Left ventricle myocardium inferior (tissue), 1 donor: ENCODE measurements at regions of chr2 and their contacts with region 1.

Region 1: DNA sequence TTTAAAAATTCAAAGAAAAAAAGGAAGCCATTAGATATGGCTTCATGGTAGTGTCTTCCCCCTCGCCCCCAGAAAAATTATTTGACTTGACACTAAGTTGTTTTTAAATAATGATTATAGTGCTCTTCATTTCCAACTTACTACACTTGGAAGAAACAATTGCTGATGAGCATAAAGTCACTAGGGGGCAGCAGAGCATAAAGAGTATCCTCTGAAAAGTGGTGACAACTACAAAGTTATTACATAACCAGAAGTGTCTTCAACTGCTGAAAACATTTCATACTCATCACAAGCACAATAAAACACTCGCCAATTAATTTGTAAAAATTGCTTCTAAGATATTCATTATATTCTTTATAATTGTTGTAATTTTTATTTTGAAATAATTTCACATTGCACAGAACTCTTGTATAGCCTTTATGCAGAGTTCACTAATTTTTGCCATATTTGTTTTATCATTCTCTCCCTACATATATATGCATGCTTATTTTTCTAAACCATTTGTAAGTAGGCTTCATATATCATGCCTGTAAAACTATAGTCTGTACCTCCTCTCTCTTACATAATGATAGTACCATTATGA is 54.9 kb downstream of the EXOC6B start:
- DNase-seq: no peak
- H3K4me3 ChIP-seq: no peak overlapping the region
- H3K27ac ChIP-seq: no peak overlapping the region
- H3K4me1 ChIP-seq: peaks cover 10% of the 10 kb centered on the region
- H3K27me3 ChIP-seq: no peaks in the 10 kb centered on the region
- CTCF ChIP-seq: peak; percentile 93

Region 2: DNA sequence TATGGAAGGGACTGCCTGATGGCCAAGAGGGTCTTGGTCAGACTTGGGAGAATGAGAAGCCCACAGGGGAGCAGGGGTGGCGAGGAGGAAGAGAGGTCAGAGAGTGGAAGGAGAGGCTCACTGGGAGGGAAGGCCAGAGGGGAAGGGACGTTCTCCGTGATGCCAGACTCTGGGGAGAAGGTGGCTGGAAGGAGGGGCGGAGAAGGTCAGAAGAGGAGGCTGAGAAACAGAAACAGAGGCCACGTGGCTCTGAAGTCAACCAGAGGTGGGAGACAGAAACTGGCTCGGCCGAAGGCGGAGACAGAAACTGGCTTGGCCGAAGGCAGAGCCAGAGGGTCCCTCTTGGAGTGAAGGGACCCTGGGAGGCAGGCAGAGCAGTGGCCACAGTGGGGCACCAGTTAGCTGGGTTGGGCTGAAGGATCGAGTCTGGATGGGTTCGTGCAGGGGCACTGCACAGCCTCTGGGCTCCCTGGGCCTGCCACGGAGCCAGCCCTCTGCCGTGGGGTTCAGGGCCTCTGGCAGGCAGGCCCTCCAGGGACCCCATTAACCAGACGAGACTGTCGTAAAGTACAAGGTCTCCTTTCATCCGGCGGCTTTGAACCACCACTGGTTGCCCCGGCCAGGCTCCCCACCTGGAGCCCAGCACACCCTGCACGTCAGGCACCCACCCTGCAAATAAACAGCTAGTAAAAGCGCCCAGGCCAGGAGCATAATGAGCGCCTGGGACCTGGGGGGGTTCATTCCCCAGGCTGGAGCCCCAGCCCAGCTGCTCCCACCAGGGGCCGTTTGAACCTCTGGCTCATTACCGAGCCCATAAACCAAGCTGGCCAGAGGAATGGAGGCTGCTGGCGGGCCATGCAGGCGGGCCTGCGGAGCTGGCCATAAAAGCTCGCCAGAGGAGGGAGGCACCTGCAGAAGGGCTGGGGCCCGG is 1098.8 kb before region 1 on chr2:
- intact Hi-C with region 1: no loop called
- DNase-seq: no peak
- H3K4me3 ChIP-seq: no peak overlapping the region
- H3K27ac ChIP-seq: no peak overlapping the region
- H3K4me1 ChIP-seq: no peaks in the 10 kb centered on the region
- H3K27me3 ChIP-seq: no peaks in the 10 kb centered on the region
- CTCF ChIP-seq: peak; percentile 9

Region 3: GRCh38 chr2:72862239-72862988 is 91.4 kb after region 1 on chr2:
- intact Hi-C with region 1: loop called (anchors 5 kb)
- DNase-seq: peak; percentile 87
- H3K4me3 ChIP-seq: peak overlapping the region; percentile 49
- H3K27ac ChIP-seq: no peak overlapping the region
- H3K4me1 ChIP-seq: peaks cover 10% of the 10 kb centered on the region
- H3K27me3 ChIP-seq: peaks cover 24% of the 10 kb centered on the region
- CTCF ChIP-seq: peak; percentile 99